ENCODE measurements at regions of chr20 and their contacts with region 1.

Region 1: GRCh38 chr20:25216199-25216945 is 20.9 kb downstream of the ENTPD6 start:
- DNase-seq: no peak
- ATAC-seq: no peak
- H3K4me3 ChIP-seq: no peak overlapping the region
- H3K27ac ChIP-seq: no peak overlapping the region
- H3K4me1 ChIP-seq: no peaks in the 10 kb centered on the region
- H3K27me3 ChIP-seq: no peaks in the 10 kb centered on the region
- CTCF ChIP-seq: no peak

Region 2: DNA sequence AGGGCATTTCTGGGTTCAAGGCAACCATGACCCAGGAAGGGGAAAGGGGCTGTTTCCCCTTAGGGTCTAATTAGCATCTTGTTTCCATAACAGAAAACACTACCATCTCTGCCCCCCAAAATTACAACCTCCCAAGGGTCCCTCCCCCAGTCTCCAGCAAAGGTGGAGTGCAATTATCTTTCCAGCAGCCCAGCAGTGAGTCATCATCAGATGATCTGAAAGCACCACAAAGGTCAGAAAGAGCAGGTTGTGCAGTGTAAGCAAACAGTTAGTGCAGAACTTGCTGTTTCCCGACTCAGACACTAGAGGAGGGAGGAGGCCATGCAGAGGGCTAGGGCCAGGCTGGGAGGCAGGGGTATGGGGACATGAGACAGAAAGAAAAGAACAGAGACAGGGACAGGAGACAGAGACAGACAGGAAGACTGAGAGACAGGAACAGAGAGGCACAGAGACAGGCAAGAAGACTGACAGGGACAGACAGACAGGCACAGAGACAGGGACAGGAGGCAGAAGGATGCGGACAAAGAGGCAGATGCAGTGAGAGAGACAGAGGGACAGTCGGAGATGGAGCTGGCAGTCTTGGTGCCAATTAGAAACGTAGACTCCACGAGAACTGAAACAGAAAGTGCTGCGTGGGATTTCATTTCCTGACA is 94.0 kb after region 1 on chr20:
- intact Hi-C with region 1: loop called in 1 of 3 experiments (anchors 10 kb)
- DNase-seq: peak in 3 of 6 donors; percentile 40 to 59 (median 53)
- ATAC-seq: peak; percentile 73 to 92 (median 85)
- H3K4me3 ChIP-seq: no peak overlapping the region
- H3K27ac ChIP-seq: peak overlapping the region in 2 of 4 donors; percentile 47 to 52
- H3K4me1 ChIP-seq: peaks cover 0 to 9% (median 0%) of the 10 kb centered on the region in 3 donors
- H3K27me3 ChIP-seq: no peaks in the 10 kb centered on the region
- CTCF ChIP-seq: no peak

Measured in pancreas (tissue), 10 donors.